Transverse colon (tissue), 4 donors: ENCODE measurements at regions of chr20 and their contacts with region 1.

Region 1: DNA sequence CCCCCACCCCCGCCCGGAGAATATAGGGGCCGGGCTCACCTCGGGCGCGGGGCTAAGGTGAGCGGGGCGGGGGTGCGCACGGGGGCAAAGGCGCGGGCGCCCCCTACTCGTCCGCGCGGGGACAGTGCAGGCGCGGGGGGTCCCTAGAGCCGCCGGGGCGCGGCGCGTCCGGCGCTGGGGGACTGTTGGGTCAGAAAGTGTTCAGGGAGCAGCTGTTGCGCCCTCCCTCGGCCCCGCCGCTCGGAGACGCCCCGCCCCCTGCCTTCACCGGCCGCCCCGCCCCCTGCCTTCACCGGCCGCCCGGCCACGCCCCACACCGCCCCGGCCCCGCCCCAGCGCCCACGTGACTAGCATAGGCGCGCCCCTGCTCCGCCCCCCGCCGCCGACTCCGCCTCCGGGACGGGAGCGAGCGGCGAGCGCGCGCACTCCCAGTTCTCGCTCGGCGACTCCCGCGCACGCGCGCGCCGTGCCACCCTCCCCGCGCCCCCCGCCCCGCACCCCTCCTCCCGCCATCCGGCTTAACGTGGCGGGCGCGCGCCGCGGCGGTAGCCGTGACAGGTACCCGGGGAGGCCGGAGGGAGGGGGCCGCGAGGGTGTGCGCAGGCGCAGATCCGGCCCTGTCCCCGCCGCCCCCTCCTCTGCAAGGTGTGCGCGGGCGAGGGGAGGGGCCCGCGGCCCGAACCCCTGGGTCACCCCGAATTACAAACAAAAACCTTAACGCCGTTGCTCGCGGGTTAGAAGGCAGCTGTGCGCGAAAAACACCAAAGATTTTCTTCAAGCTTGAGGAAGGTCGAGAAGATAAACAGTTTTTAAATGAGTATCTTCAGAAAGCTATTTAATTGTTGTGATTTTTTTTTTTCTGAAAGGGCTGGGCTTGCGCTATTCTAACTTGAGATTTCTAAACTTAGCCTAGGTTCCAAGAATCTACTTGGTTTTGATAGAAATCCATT is 704 bp upstream of the ZNF217 start:
- DNase-seq: peak; percentile 99
- H3K4me3 ChIP-seq: peak overlapping the region; percentile 68 to 99 (median 94)
- H3K27ac ChIP-seq: peak overlapping the region; percentile 99 to 100 (median 100)
- H3K4me1 ChIP-seq: peaks cover 0 to 43% (median 9%) of the 10 kb centered on the region in 4 donors
- H3K27me3 ChIP-seq: no peaks in the 10 kb centered on the region
- CTCF ChIP-seq: no peak
- EP300 ChIP-seq: no peak
- POLR2A ChIP-seq: peak; percentile 72

Region 2: DNA sequence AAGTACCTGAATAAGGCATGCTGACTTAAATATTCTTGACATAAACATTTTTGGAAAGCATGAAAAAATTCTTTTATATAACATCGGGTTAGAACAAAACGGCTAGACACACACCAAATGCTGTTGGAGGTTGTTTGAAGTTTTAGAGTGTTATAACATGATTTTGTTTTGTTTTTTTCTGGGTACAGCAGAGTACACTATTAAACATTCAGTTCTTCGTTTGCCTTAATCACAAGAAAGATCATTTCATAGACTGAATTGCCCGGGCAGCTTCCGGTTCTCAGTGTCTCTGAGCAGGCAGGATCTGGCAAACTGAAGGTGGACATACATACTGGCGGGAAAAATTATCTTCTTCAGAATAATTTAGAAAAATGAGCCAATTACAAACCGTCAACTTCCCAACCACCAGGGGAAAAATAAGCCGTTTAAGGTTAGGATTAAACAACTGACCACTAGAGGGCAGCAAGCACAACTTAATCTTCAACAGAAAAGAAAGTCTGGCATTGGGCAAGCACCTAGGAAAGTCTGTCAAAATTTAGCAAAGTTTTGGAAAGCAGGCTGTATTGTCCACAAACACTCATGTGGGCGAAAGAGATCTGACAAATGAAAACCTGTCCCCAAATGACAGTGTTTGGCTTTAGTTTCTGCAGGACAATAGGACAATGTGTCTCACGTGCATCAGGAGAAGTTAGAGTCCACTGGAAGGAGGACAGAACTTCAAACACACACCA is 15.7 kb before region 1 on chr20:
- in situ Hi-C with region 1: no loop called
- intact Hi-C with region 1: no loop called
- DNase-seq: peak; percentile 51
- H3K4me3 ChIP-seq: peak overlapping the region in 1 of 4 donors; percentile 24
- H3K27ac ChIP-seq: peak overlapping the region; percentile 81 to 91 (median 86)
- H3K4me1 ChIP-seq: peaks cover 38 to 69% (median 48%) of the 10 kb centered on the region in 4 donors
- H3K27me3 ChIP-seq: no peaks in the 10 kb centered on the region
- CTCF ChIP-seq: peak; percentile 88 to 100 (median 91)
- EP300 ChIP-seq: no peak
- POLR2A ChIP-seq: no peak

Region 3: GRCh38 chr20:53828682-53829254 is 234.4 kb after region 1 on chr20:
- in situ Hi-C with region 1: loop called in 1 of 4 experiments (anchors 25 kb)
- intact Hi-C with region 1: no loop called
- DNase-seq: no peak
- H3K4me3 ChIP-seq: peak overlapping the region in 2 of 4 donors; percentile 9 to 31
- H3K27ac ChIP-seq: peak overlapping the region; percentile 80 to 90 (median 88)
- H3K4me1 ChIP-seq: peaks cover 6 to 47% (median 26%) of the 10 kb centered on the region in 4 donors
- H3K27me3 ChIP-seq: no peaks in the 10 kb centered on the region
- CTCF ChIP-seq: no peak
- EP300 ChIP-seq: no peak
- POLR2A ChIP-seq: no peak

Region 4: DNA sequence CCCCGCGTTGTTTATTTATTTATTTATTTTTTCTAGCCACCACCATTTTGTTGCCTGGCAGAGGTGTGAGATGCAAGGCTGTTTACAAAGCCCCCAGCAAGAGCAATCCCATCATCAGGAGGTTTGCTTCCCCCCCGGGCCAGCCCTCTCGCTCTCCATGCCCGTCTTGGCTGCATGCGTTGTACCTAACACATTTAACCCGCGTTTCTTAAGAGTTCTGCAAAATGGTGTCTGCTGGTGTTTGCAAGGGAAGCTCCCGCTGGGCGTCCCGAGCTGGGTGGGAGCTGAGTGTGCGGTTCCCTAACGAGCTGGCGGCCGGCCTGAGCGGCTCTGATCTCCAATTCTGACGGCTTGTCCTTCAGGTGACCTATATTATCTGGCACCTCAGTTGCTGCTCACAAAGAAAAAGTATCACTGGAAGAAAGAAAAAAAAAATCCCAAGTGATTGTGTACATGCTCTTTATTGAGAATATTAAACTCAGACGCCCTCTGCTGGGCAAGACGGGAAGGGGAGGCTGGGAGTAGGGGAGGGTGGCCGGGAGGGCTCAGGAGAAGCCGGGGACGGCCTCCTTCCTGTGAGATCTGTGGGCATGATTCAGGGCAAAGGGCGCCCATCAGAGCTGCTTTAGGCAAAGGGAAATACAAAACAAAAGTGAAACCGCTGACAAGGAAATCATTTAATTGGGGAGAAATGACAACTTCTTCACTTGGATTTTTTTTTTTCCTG is 321.3 kb after region 1 on chr20:
- in situ Hi-C with region 1: loop called in 1 of 4 experiments (anchors 25 kb)
- intact Hi-C with region 1: no loop called
- DNase-seq: peak; percentile 99
- H3K4me3 ChIP-seq: peak overlapping the region; percentile 46 to 71 (median 46)
- H3K27ac ChIP-seq: peak overlapping the region; percentile 92 to 95 (median 92)
- H3K4me1 ChIP-seq: peaks cover 28 to 37% (median 33%) of the 10 kb centered on the region in 4 donors
- H3K27me3 ChIP-seq: no peaks in the 10 kb centered on the region
- CTCF ChIP-seq: peak; percentile 91 to 98 (median 93)
- EP300 ChIP-seq: no peak
- POLR2A ChIP-seq: no peak